Activated CD8-positive, alpha-beta T cell treated with anti-CD3 and anti-CD28 coated beads, Interleukin-2, amount 10 ng/mL, durations not matched to agents 7 days and 5 days (primary cell): ENCODE measurements at regions of chr13 and their contacts with region 1.

Region 1: GRCh38 chr13:106567474-106568298 is at the start of gene ARGLU1:
- DNase-seq: peak; percentile 96
- ATAC-seq: peak; percentile 85
- H3K4me3 Mint-ChIP-seq: peak within 1 kb of the TSS; percentile 97
- H3K27ac Mint-ChIP-seq: peak within 1 kb of the TSS; percentile 93
- H3K4me1 Mint-ChIP-seq: peaks cover 54% of the 10 kb centered on the region
- H3K27me3 Mint-ChIP-seq: no peaks in the 10 kb centered on the region
- total RNA-seq, gene ARGLU1: 86.6 to 97.0 TPM

Region 2: DNA sequence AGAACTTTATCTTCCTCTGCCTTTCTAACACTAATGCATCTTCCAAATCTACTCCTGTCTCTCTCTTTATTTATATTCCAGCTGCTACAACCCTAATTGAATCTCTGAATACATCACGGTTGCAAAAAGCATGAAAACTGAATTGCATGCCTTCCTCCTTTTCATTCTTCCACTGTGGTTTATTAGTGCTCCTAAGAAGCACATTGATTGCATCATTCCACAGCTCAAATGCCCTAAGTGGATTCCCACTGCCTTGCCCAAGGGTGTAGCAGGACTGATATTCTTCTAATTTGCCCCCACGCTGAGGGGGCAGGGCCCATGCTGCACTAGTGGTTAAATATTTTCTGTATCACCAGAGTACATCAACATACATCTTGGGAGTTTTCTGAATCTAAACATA is 673.0 kb before region 1 on chr13:
- CTCF ChIA-PET with region 1: no interaction called
- POLR2A ChIA-PET with region 1: no interaction called
- DNase-seq: no peak
- ATAC-seq: no peak
- H3K4me3 Mint-ChIP-seq: no peak overlapping the region
- H3K27ac Mint-ChIP-seq: no peak overlapping the region
- H3K4me1 Mint-ChIP-seq: no peaks in the 10 kb centered on the region
- H3K27me3 Mint-ChIP-seq: no peaks in the 10 kb centered on the region

Region 3: GRCh38 chr13:106464076-106464475 is 103.6 kb before region 1 on chr13:
- CTCF ChIA-PET with region 1: no interaction called
- POLR2A ChIA-PET with region 1: no interaction called
- DNase-seq: no peak
- ATAC-seq: no peak
- H3K4me3 Mint-ChIP-seq: no peak overlapping the region
- H3K27ac Mint-ChIP-seq: no peak overlapping the region
- H3K4me1 Mint-ChIP-seq: no peaks in the 10 kb centered on the region
- H3K27me3 Mint-ChIP-seq: no peaks in the 10 kb centered on the region

Region 4: DNA sequence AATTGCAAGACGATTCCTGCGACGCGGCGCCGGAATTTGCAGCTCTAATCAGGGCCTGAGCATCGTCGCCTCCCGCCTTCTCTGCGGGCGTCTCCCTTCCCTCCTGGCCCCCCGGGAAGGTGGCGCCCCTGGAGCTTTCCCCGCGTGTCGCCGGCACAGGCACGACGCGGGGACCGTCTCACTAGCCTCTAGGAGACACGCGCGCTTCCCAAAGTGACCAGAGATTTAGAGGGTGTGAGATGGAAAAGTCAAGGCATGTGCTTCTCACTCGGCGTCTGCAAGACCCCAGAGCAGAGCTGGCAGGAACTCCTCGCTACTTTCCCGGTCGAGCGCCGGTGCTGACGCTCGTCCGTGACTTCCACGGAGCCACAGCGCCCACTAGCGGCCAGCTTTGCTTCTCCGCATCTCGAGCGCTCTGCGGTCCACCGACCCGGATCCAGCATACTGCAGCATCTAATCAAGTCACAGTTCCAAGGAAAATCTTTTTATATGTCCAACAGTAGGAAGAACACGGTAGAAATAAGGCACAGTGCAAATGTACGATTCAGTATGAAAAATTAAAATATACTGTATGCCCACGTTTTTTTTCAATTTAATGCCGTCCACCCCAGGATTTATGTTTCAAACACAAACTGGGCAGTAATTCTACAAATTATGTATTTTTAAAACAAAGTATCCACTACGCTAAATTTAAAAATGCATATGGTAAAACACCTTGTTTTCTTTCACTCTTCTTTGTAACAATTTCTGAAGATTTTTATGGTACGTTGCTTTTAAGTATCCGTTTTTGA is 31.2 kb before region 1 on chr13:
- CTCF ChIA-PET with region 1: interaction called, 57 read pairs
- POLR2A ChIA-PET with region 1: interaction called, 7 read pairs
- DNase-seq: peak; percentile 89
- ATAC-seq: peak; percentile 41
- H3K4me3 Mint-ChIP-seq: peak overlapping the region; percentile 85
- H3K27ac Mint-ChIP-seq: peak overlapping the region; percentile 62
- H3K4me1 Mint-ChIP-seq: peaks cover 18% of the 10 kb centered on the region
- H3K27me3 Mint-ChIP-seq: peaks cover 24% of the 10 kb centered on the region

Region 5: DNA sequence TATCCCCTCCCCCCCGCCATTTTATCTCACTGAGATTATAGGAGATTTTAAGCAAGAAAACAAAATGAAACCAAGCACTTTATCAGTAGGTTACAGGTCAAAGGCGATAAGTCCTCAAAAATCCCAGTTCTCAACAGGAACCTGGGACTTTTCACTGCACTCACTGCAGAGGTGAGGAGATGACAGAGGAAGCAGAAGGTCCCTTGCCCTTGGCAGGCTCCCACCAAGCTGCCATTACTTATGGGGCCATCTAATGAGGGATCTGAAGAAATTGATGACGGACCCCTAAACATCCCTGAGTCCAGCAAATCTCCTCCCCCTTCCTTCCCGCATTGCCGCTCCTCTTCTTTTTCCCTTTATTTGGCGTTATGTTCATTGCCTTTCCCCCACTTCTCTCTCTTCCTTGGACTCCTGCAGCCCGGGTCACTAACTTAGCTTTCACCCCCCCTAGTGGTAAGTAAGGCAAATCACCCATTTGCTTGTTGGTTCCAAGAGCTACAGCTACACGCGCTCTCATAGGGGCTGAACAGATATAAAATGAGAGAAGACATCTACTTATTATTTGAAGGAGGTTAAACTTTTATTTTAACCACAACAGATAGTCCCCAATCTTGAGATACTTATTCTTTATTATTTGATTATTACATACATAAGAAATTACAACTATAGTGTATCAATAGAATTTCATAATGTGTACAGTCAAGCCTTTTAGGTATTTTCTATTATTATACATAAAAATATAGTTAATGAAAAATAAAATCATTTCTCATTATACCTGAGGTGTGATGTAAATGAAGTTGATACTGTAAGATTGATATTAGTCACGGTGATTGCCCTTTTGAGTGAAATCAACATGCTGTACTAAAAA is 52.2 kb after region 1 on chr13:
- CTCF ChIA-PET with region 1: interaction called, 20 read pairs
- POLR2A ChIA-PET with region 1: no interaction called
- DNase-seq: peak; percentile 32
- ATAC-seq: peak; percentile 82
- H3K4me3 Mint-ChIP-seq: no peak overlapping the region
- H3K27ac Mint-ChIP-seq: no peak overlapping the region
- H3K4me1 Mint-ChIP-seq: no peaks in the 10 kb centered on the region
- H3K27me3 Mint-ChIP-seq: peaks cover 23% of the 10 kb centered on the region